Body of pancreas (tissue), 4 donors: ENCODE measurements at regions of chr22 and their contacts with region 1.

Region 1: DNA sequence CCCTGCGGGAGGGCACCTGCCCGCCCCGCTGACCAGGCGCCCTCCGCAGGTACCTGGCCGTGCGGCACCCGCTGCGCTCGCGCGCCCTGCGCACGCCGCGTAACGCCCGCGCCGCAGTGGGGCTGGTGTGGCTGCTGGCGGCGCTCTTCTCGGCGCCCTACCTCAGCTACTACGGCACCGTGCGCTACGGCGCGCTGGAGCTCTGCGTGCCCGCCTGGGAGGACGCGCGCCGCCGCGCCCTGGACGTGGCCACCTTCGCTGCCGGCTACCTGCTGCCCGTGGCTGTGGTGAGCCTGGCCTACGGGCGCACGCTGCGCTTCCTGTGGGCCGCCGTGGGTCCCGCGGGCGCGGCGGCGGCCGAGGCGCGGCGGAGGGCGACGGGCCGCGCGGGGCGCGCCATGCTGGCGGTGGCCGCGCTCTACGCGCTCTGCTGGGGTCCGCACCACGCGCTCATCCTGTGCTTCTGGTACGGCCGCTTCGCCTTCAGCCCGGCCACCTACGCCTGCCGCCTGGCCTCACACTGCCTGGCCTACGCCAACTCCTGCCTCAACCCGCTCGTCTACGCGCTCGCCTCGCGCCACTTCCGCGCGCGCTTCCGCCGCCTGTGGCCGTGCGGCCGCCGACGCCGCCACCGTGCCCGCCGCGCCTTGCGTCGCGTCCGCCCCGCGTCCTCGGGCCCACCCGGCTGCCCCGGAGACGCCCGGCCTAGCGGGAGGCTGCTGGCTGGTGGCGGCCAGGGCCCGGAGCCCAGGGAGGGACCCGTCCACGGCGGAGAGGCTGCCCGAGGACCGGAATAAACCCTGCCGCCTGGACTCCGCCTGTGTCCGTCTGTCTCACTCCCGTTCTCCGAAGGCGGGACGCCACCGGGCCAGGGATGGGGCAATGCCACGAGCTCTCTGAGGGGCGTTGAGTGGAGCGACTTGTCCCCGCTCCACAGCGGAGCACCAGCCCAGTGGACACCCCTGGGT is 1.8 kb downstream of the GALR3 start:
- DNase-seq: no peak
- ATAC-seq: no peak
- H3K4me3 ChIP-seq: no peak overlapping the region
- H3K27ac ChIP-seq: no peak overlapping the region
- H3K4me1 ChIP-seq: no peaks in the 10 kb centered on the region
- H3K27me3 ChIP-seq: no peaks in the 10 kb centered on the region
- CTCF ChIP-seq: no peak
- POLR2A ChIP-seq: no peak

Region 2: GRCh38 chr22:37954686-37955085 is 129.7 kb after region 1 on chr22:
- intact Hi-C with region 1: loop called (anchors 5 kb)
- DNase-seq: no peak
- ATAC-seq: no peak
- H3K4me3 ChIP-seq: no peak overlapping the region
- H3K27ac ChIP-seq: no peak overlapping the region
- H3K4me1 ChIP-seq: peaks cover 18% of the 10 kb centered on the region
- H3K27me3 ChIP-seq: no peaks in the 10 kb centered on the region
- CTCF ChIP-seq: no peak
- POLR2A ChIP-seq: no peak

Region 3: GRCh38 chr22:38353142-38353629 is 528.2 kb after region 1 on chr22:
- intact Hi-C with region 1: no loop called
- DNase-seq: peak; percentile 68 to 81 (median 74)
- ATAC-seq: peak; percentile 91
- H3K4me3 ChIP-seq: no peak overlapping the region
- H3K27ac ChIP-seq: no peak overlapping the region
- H3K4me1 ChIP-seq: peaks cover 8% of the 10 kb centered on the region
- H3K27me3 ChIP-seq: no peaks in the 10 kb centered on the region
- CTCF ChIP-seq: peak; percentile 87 to 99 (median 97)
- POLR2A ChIP-seq: no peak